ENCODE measurements at regions of chr5 and their contacts with region 1.

Region 1: GRCh38 chr5:83085106-83085505 is 7.8 kb downstream of the XRCC4 start:
- DNase-seq: peak; percentile 71
- ATAC-seq: peak; percentile 96
- H3K4me3 ChIP-seq: no peak overlapping the region
- H3K27ac ChIP-seq: no peak overlapping the region
- H3K4me1 ChIP-seq: peaks cover 21% of the 10 kb centered on the region
- H3K27me3 ChIP-seq: no peaks in the 10 kb centered on the region
- CTCF ChIP-seq: no peak
- EP300 ChIP-seq: peak; percentile 29 to 93; a peak in 3 of 4 replicates
- POLR2A ChIP-seq: no peak
- RAD21 ChIP-seq: no peak

Region 2: DNA sequence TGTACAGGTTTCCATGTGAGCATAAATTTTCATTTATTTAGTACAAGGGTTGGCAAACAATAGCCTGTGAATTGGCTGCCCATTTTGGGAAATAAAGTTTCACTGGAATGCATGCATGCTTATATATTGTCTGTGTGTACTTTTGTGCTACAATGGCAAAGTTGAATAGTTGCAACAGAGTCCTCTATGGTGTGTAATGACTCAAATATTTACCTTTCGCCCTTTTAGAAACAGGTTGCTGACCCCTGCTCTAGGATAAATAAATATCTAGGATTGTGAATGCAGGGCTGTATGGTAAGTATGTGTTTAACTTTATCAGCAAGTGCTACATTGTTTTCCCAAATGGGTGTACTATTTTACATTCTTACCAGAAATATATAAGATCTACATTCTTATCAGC is 39.5 kb after region 1 on chr5:
- CTCF ChIA-PET with region 1: no interaction called
- POLR2A ChIA-PET with region 1: no interaction called
- in situ Hi-C with region 1: no loop called
- intact Hi-C with region 1: loop called (anchors 2 kb)
- DNase-seq: peak; percentile 94
- ATAC-seq: peak; percentile 99
- H3K4me3 ChIP-seq: no peak overlapping the region
- H3K27ac ChIP-seq: no peak overlapping the region
- H3K4me1 ChIP-seq: peaks cover 22% of the 10 kb centered on the region
- H3K27me3 ChIP-seq: no peaks in the 10 kb centered on the region
- CTCF ChIP-seq: no peak
- EP300 ChIP-seq: peak; percentile 90 to 94
- POLR2A ChIP-seq: no peak
- RAD21 ChIP-seq: no peak

Region 3: GRCh38 chr5:83192947-83193346 is 107.8 kb after region 1 on chr5:
- CTCF ChIA-PET with region 1: no interaction called
- POLR2A ChIA-PET with region 1: no interaction called
- in situ Hi-C with region 1: no loop called
- intact Hi-C with region 1: no loop called
- DNase-seq: no peak
- ATAC-seq: no peak
- H3K4me3 ChIP-seq: no peak overlapping the region
- H3K27ac ChIP-seq: no peak overlapping the region
- H3K4me1 ChIP-seq: no peaks in the 10 kb centered on the region
- H3K27me3 ChIP-seq: no peaks in the 10 kb centered on the region
- CTCF ChIP-seq: no peak
- EP300 ChIP-seq: no peak
- POLR2A ChIP-seq: no peak
- RAD21 ChIP-seq: no peak

Region 4: DNA sequence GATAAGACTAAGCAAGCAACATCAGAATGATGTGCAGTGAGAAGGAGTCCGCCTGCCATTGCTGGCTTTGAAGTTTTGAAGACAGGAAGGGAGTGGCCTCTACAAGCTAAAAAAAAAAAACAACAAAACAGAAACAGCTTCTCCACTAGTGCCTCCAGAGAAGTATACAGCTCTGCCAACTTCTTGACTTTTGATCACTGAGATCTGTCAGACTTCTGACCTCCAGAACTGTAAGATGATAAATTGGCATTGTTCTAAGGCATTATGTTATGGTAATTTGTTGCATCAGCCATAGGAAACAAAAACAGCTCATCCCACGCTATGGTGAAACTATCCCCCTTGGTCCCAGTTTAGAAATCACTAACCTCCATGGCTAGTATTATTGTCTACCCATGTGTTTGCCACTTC is 255.4 kb after region 1 on chr5:
- CTCF ChIA-PET with region 1: no interaction called
- POLR2A ChIA-PET with region 1: no interaction called
- in situ Hi-C with region 1: no loop called
- intact Hi-C with region 1: no loop called
- DNase-seq: no peak
- ATAC-seq: no peak
- H3K4me3 ChIP-seq: no peak overlapping the region
- H3K27ac ChIP-seq: no peak overlapping the region
- H3K4me1 ChIP-seq: no peaks in the 10 kb centered on the region
- H3K27me3 ChIP-seq: no peaks in the 10 kb centered on the region
- CTCF ChIP-seq: no peak
- EP300 ChIP-seq: no peak
- POLR2A ChIP-seq: no peak
- RAD21 ChIP-seq: no peak